GM23248 (cell line): ENCODE measurements at regions of chr18 and their contacts with region 1.

Region 1: DNA sequence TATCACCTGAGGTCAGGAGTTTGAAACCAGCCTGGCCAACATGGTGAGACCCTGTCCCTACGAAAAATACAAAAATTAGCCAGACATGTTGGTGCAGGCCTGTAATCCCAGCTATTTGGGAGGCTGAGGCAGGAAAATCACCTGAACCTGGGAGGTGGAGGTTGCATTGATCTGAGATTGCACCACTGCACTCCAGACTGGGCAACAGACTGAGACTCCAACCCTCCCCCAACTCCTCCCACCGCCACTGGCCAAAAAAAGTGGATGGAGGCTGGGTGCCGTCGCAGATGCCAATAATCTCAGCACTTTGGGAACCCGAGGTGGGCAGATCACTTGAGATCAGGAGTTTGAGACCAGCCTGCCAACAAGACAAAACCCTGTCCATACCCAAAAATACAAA is 10.1 kb upstream of the SPIRE1 start:
- DNase-seq: no peak
- H3K4me3 ChIP-seq: no peak overlapping the region
- H3K27ac ChIP-seq: no peak overlapping the region
- H3K4me1 ChIP-seq: no peaks in the 10 kb centered on the region
- H3K27me3 ChIP-seq: no peaks in the 10 kb centered on the region

Region 2: DNA sequence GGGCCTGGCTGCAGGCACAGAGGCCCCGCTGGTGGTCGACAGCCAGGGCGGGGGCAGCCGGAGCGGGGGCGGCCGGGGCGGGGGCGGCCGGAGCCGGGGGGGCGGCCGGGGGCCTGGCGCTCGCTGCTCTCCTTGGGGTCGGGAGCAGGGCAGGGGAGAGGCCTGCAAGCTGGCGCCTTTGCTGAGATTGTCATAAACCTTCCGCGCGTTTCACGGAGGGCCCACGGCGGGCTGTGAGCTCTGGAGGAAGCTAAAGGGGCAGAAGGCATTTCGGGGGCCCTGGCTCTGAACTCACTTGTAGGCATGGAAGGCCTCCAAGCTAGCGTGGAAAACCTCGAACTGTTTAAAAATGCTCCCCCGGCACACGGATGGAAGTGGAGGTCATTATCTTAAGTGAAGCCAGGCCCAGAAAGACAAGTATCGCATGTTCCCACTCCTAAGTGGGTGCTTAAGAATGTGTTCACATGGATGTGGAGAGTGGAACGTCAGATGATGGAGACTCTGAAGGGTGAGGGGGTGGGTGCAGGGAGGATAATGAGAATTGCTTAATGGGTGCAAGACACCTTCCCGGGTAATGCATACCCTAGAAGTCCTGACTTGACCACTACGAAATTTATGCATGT is 259.7 kb before region 1 on chr18:
- in situ Hi-C with region 1: loop called (anchors 5 kb)
- DNase-seq: peak; percentile 53
- H3K4me3 ChIP-seq: peak overlapping the region; percentile 75
- H3K27ac ChIP-seq: peak overlapping the region; percentile 63
- H3K4me1 ChIP-seq: peaks cover 16% of the 10 kb centered on the region
- H3K27me3 ChIP-seq: no peaks in the 10 kb centered on the region